ENCODE measurements at regions of chr2 and their contacts with region 1.

Region 1: DNA sequence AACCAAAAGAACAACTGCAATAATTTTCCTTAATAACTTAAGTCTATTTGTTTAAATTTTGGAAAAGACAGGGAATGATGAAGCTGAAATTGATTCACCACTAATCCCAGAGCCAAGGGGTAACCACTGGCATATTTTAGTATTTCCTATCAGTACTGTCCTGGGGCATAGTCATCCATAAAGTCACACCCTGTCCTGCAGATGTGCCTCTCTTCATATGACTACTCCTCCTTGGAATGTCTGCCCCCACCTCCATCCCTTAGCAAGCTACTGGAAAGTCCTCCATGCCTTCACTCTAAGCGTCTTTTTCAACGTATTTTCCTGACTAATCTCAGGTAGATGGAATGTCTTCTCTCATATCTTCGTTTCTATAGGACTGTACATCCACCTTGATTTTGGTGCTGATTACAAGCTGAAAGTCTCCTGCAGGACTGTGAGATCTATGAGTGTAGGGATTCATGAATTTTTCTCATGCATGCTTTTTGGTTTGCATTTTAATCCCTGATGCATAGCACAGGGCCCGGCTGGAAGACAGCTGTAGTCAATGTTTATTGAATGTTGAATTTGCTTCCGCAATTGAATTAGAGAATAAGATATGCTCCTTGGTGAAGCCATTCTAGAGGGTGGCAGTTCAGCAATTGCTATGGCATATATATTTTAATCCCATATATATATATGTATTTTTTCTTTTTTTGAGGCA is 85.6 kb downstream of the MOGAT1 start:
- DNase-seq: no peak
- H3K4me3 ChIP-seq: no peak overlapping the region
- H3K27ac ChIP-seq: no peak overlapping the region
- H3K27me3 ChIP-seq: no peaks in the 10 kb centered on the region
- CTCF ChIP-seq: no peak

Region 2: GRCh38 chr2:222677981-222678380 is 79.1 kb before region 1 on chr2:
- intact Hi-C with region 1: no loop called
- DNase-seq: no peak
- H3K4me3 ChIP-seq: no peak overlapping the region
- H3K27ac ChIP-seq: no peak overlapping the region
- H3K27me3 ChIP-seq: peaks cover 0 to 5% (median 0%) of the 10 kb centered on the region in 45 donors
- CTCF ChIP-seq: no peak

Region 3: GRCh38 chr2:222792001-222792611 is 35.0 kb after region 1 on chr2:
- intact Hi-C with region 1: loop called in 1 of 2 experiments (anchors 5 kb)
- DNase-seq: peak in 4 of 10 donors; percentile 53 to 70 (median 64)
- H3K4me3 ChIP-seq: peak overlapping the region in 14 of 59 donors; percentile 0 to 36 (median 19)
- H3K27ac ChIP-seq: peak overlapping the region in 55 of 59 donors; percentile 0 to 84 (median 65)
- H3K27me3 ChIP-seq: no peaks in the 10 kb centered on the region
- CTCF ChIP-seq: no peak

Region 4: GRCh38 chr2:222903234-222904220 is 146.4 kb after region 1 on chr2:
- intact Hi-C with region 1: no loop called
- DNase-seq: peak in 1 of 10 donors; percentile 54
- H3K4me3 ChIP-seq: no peak overlapping the region
- H3K27ac ChIP-seq: peak overlapping the region in 29 of 59 donors; percentile 1 to 77 (median 45)
- H3K27me3 ChIP-seq: no peaks in the 10 kb centered on the region
- CTCF ChIP-seq: peak; percentile 46 to 80 (median 66)

Measured in dorsolateral prefrontal cortex (tissue), 120 donors.